HEK293 (cell line): ENCODE measurements at regions of chr12 and their contacts with region 1.

Region 1: DNA sequence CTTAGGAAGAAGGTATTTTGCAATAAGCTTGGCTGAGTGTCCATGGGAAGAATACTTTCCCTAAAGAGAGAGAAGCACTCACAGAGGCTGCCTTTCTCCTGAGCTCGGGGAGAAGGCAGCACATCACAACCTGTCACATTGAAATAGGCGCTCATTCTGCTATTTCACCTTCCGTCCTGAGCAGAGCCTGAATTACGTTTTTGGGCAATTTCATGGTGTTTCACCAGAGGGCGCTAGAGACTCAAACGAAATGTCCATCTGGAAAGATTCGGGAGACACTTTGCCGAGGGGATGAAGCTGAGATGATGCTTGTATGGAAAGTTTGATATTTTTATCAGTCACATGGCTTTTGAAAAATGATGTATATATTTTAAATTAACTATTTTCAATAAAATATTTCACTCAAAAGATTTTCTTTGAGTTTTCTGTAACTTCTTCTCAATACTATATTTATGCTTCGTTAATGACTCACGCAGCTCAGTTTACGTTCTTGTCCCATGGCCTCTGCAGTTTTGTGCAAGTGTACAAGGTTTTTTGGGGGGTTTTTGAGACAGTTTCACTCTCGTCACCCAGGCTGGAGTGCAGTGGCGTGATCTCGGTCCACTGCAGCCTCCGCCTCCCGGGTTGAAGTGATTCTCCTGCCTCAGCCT is 17.4 kb upstream of the B4GALNT3 start:
- H3K4me3 ChIP-seq: no peak overlapping the region
- H3K27ac ChIP-seq: no peak overlapping the region
- H3K4me1 ChIP-seq: no peaks in the 10 kb centered on the region
- CTCF ChIP-seq: peak; percentile 65

Region 2: DNA sequence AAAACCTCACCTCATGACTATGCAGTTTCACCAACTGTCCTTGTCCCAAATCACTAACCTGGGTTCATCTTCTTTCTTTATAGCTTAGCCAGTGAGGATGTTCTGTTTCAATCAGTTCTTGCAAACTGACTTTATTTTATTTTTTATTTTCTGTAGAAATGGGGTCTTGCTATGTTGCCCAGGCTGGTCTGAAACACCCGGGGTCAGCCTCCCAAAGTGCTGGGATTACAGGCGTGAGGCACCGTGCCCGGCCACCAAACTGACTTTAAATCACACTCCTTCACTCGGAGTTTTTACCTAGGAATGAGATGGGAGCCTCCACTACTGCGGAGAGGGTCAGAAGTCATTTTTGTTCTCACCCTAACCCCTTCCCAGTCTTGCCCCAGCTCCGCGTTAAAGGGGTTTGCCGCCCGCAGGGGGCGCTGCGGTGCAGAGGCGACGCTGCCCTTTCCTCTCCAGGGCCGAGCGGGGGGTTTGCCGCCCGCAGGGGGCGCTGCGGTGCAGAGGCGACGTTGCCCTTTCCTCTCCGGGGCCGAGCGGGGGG is 10.4 kb after region 1 on chr12:
- CTCF ChIA-PET with region 1: interaction called, 47 read pairs
- POLR2A ChIA-PET with region 1: no interaction called
- H3K4me3 ChIP-seq: no peak overlapping the region
- H3K27ac ChIP-seq: no peak overlapping the region
- H3K4me1 ChIP-seq: peaks cover 2% of the 10 kb centered on the region; the same call in 1 of the 2 replicates
- CTCF ChIP-seq: no peak

Region 3: DNA sequence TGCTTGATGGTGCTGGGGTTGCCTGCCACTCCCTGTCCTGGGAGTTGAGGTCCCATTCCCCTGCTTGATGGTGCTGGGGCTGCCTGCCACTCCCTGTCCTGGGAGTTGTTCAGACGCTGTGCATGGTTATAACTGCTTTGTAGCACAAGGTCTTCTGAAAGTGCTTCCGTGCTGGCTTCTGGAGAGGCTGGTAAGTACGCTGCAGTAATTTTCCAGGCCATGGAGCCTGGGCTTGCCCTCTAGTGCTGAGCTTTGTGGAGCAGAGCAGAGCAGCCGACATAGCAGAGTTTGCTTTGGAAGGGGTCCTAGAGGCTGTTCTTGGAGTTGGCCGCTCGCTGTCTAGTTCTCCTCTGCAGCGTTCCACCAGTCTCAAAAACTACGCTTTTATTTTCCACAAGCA is 23.7 kb after region 1 on chr12:
- CTCF ChIA-PET with region 1: interaction called, 11 read pairs
- POLR2A ChIA-PET with region 1: no interaction called
- H3K4me3 ChIP-seq: no peak overlapping the region
- H3K27ac ChIP-seq: no peak overlapping the region
- H3K4me1 ChIP-seq: peaks cover 9% of the 10 kb centered on the region
- CTCF ChIP-seq: no peak

Region 4: GRCh38 chr12:537772-538171 is 95.4 kb after region 1 on chr12:
- CTCF ChIA-PET with region 1: interaction called, 37 read pairs
- POLR2A ChIA-PET with region 1: no interaction called
- H3K4me3 ChIP-seq: no peak overlapping the region
- H3K27ac ChIP-seq: no peak overlapping the region
- H3K4me1 ChIP-seq: no peaks in the 10 kb centered on the region; the same call in 1 of the 2 replicates
- CTCF ChIP-seq: no peak

Region 5: GRCh38 chr12:553205-554000 is 111.0 kb after region 1 on chr12:
- CTCF ChIA-PET with region 1: interaction called, 119 read pairs
- POLR2A ChIA-PET with region 1: no interaction called
- H3K4me3 ChIP-seq: no peak overlapping the region
- H3K27ac ChIP-seq: no peak overlapping the region
- H3K4me1 ChIP-seq: no peaks in the 10 kb centered on the region
- CTCF ChIP-seq: no peak